Adrenal gland (tissue), 19 donors: ENCODE measurements at regions of chr10 and their contacts with region 1.

Region 1: GRCh38 chr10:11986593-11987216 is 55.9 kb downstream of the UPF2 start:
- DNase-seq: peak; percentile 69 to 93 (median 81)
- H3K4me3 ChIP-seq: no peak overlapping the region
- H3K27ac ChIP-seq: no peak overlapping the region
- H3K4me1 ChIP-seq: no peaks in the 10 kb centered on the region
- H3K27me3 ChIP-seq: no peaks in the 10 kb centered on the region
- CTCF ChIP-seq: peak; percentile 79 to 93 (median 88)
- POLR2A ChIP-seq: no peak

Region 2: GRCh38 chr10:11782793-11783557 is 203.7 kb before region 1 on chr10:
- intact Hi-C with region 1: loop called in 1 of 2 experiments (anchors 10 kb)
- DNase-seq: no peak
- H3K4me3 ChIP-seq: no peak overlapping the region
- H3K27ac ChIP-seq: no peak overlapping the region
- H3K4me1 ChIP-seq: no peaks in the 10 kb centered on the region
- H3K27me3 ChIP-seq: no peaks in the 10 kb centered on the region
- CTCF ChIP-seq: peak; percentile 52 to 75 (median 70)
- POLR2A ChIP-seq: no peak

Region 3: GRCh38 chr10:12018438-12019282 is 32.0 kb after region 1 on chr10:
- intact Hi-C with region 1: no loop called
- DNase-seq: no peak
- H3K4me3 ChIP-seq: no peak overlapping the region
- H3K27ac ChIP-seq: no peak overlapping the region
- H3K4me1 ChIP-seq: peaks cover 0 to 18% of the 10 kb centered on the region in 2 donors
- H3K27me3 ChIP-seq: no peaks in the 10 kb centered on the region
- CTCF ChIP-seq: no peak
- POLR2A ChIP-seq: no peak